CD14-positive monocyte (primary cell): ENCODE measurements at regions of chr22 and their contacts with region 1.

Region 1: GRCh38 chr22:24768537-24769374 is 5.8 kb downstream of the PIWIL3 start:
- DNase-seq: peak in 1 of 3 donors; percentile 10
- H3K4me3 ChIP-seq: no peak overlapping the region
- H3K4me3 Mint-ChIP-seq: no peak overlapping the region
- H3K27ac ChIP-seq: no peak overlapping the region
- H3K27ac Mint-ChIP-seq: no peak overlapping the region
- H3K4me1 ChIP-seq: no peaks in the 10 kb centered on the region
- H3K4me1 Mint-ChIP-seq: no peaks in the 10 kb centered on the region
- H3K27me3 ChIP-seq: peaks cover 0 to 2% of the 10 kb centered on the region in 2 donors
- H3K27me3 Mint-ChIP-seq: peaks cover under 1 to 17% (median 12%) of the 10 kb centered on the region in 3 donors
- CTCF ChIP-seq: peak; percentile 31

Region 2: DNA sequence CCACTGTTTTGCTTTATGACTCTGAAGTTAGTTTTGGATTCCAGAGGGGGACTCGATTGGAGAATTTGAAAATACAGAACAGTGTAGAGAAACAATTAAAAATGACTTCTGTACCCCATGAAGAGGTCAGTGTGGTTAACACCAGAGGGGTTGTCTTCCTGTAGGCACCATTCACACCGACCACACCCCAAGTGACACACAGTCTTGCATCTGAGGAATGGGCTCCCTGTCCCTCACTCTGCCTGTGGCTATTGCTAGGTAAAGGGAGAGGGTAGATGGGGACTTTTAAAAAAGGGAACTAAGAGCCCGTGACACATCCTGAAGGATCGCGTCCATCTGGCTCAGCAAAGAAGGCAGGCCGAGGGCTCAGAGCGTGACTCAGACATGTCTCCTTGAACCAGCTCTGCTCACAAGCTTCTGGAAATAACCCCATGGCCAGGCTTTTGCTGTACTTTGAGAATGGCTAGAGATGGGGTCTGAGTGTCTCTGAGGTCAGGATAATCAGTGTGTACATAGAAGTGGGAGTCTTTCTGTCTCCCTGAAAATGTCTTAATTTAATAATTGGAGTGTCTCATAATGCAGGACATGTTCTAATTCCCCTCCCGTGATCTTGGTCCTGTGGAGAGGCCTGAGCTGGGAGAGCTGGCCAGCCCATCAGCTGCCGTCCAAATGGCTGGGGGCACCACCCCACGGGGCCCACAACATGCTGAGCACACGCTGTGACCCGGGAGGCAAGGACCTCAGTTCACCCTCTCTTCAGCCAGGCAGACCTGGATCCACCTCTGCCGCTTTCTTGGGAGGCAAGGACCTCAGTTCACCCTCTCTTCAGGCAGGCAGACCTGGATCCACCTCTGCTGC is 76.5 kb after region 1 on chr22:
- intact Hi-C with region 1: loop called in 1 of 2 experiments (anchors 5 kb)
- DNase-seq: peak; percentile 7 to 61 (median 10)
- H3K4me3 ChIP-seq: no peak overlapping the region
- H3K4me3 Mint-ChIP-seq: no peak overlapping the region
- H3K27ac ChIP-seq: no peak overlapping the region
- H3K27ac Mint-ChIP-seq: no peak overlapping the region
- H3K4me1 ChIP-seq: no peaks in the 10 kb centered on the region
- H3K4me1 Mint-ChIP-seq: peaks cover 2% of the 10 kb centered on the region
- H3K27me3 ChIP-seq: no peaks in the 10 kb centered on the region
- H3K27me3 Mint-ChIP-seq: peaks cover 0 to 2% (median 0%) of the 10 kb centered on the region in 3 donors
- CTCF ChIP-seq: no peak

Region 3: GRCh38 chr22:25057013-25057881 is 288.5 kb after region 1 on chr22:
- intact Hi-C with region 1: loop called in 1 of 2 experiments (anchors 10 kb)
- DNase-seq: peak in 2 of 3 donors; percentile 0 to 12
- H3K4me3 ChIP-seq: no peak overlapping the region
- H3K4me3 Mint-ChIP-seq: no peak overlapping the region
- H3K27ac ChIP-seq: no peak overlapping the region
- H3K27ac Mint-ChIP-seq: no peak overlapping the region
- H3K4me1 ChIP-seq: no peaks in the 10 kb centered on the region
- H3K4me1 Mint-ChIP-seq: peaks cover 2% of the 10 kb centered on the region
- H3K27me3 ChIP-seq: peaks cover 0 to 4% of the 10 kb centered on the region in 2 donors
- H3K27me3 Mint-ChIP-seq: peaks cover 2 to 12% (median 7%) of the 10 kb centered on the region in 3 donors
- CTCF ChIP-seq: peak; percentile 82